ENCODE measurements at regions of chr7 and their contacts with region 1.

Region 1: DNA sequence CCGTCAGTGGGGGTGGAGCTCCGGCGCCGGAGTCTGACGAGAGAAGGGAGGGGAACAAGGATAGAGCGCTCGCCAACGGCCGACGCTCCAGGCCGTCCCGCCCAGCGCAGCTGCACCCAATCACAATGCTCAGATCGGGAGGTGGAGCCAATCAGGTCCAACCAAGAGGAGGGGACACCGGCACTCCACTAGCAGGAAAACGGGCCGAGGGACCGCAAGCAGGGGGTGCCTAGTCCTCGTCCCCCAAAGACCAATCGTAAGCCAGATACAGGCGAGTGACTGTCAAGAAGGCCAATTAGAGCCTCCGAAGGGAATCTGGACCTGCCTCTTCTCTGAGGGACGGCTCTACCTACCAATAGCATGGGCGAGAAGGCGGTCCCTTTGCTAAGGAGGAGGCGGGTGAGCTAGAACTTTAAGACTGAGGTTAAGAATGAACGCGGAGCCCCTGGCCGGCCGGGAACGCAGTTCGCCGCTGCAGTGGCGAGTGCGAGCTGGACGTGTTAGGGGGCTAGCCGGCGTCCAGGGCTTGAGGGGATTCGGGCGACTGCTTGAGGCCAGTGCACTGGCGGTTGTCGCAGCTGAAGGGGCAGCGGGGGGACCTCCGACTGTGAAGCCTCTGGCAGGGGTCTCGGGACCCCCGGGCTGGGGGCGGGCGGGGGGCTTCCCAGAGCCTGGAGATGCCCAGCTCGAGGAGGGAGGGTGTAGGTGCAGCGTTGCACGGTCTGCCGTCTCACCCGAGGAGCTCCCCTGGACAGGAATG is at the start of gene FBXO24:
- DNase-seq: peak; percentile 100
- ATAC-seq: peak; percentile 90
- H3K4me3 ChIP-seq: peak within 1 kb of the TSS; percentile 83
- H3K27ac ChIP-seq: peak within 1 kb of the TSS; percentile 88
- H3K4me1 ChIP-seq: peaks cover 24% of the 10 kb centered on the region
- H3K27me3 ChIP-seq: no peaks in the 10 kb centered on the region
- CTCF ChIP-seq: no peak
- EP300 ChIP-seq: 0 out of 4 replicates have a peak, but pooled peaks of 1 of the 2 experiments have one; percentile 3
- POLR2A ChIP-seq: peak; percentile 53; the same call in 1 of the 2 replicates
- RAD21 ChIP-seq: no peak
- polyA plus RNA-seq, gene FBXO24: not detected

Region 2: GRCh38 chr7:99499721-99500636 is 1086.5 kb before region 1 on chr7 and contains the start of gene ZNF394:
- CTCF ChIA-PET with region 1: no interaction called
- POLR2A ChIA-PET with region 1: no interaction called
- RAD21 ChIA-PET with region 1: no interaction called
- SMC1A ChIA-PET with region 1: no interaction called
- in situ Hi-C with region 1: no loop called
- intact Hi-C with region 1: no loop called
- DNase-seq: peak; percentile 62
- ATAC-seq: peak; percentile 66
- H3K4me3 ChIP-seq: peak within 1 kb of the TSS; percentile 95
- H3K27ac ChIP-seq: peak within 1 kb of the TSS; percentile 92
- H3K4me1 ChIP-seq: no peaks in the 10 kb centered on the region
- H3K27me3 ChIP-seq: no peaks in the 10 kb centered on the region
- CTCF ChIP-seq: no peak
- EP300 ChIP-seq: peak in 1 of 2 experiments; percentile 51; a peak in 1 of 4 replicates
- POLR2A ChIP-seq: peak; percentile 90
- RAD21 ChIP-seq: no peak
- polyA plus RNA-seq, gene ZNF394: 2.5 to 5.3 TPM

Region 3: DNA sequence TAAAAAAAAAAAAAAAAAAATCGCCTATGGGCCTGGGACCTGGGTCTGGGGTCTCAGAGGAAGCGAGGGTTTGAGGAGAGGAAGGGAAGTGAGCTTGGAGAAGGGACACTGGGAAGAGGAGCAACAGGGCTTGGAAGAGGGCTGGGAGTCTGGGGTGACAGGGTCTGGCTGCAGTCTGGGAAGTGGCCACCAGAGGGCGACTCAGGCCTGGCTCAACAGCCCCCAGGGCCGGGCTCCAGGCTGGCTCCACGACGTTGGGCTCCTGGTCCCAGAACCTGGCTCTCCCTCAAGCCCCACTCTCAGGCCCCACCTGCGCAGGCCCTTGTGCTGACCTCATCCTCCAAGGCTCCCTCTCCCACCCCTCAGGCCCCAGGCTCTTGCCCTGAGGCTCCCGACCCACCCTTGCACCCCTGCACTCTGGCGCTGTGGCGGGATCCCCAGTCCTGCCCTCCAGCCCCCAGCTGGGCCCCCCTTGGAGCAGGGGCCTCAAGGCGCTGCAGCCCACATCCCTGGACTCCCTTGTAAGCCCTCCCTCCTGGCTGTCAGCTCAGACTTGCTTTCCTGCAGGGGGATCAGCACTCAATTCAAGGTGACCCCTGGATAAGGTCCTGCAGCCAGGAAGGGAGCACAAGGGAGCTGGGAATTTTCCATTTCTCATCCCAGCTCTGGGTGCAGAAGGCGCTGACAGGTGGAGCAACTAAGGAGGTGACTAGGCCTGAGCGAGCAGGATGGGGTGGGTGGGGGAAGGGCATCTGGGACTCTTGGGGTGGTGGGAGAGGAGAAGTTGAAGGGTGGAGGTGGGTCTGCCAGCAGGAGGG is 117.0 kb before region 1 on chr7:
- CTCF ChIA-PET with region 1: interaction called, 15 read pairs
- POLR2A ChIA-PET with region 1: interaction called, 8 read pairs
- RAD21 ChIA-PET with region 1: interaction called, 5 read pairs
- SMC1A ChIA-PET with region 1: interaction called, 3 read pairs
- in situ Hi-C with region 1: no loop called
- intact Hi-C with region 1: no loop called
- DNase-seq: no peak
- ATAC-seq: peak; percentile 94
- H3K4me3 ChIP-seq: no peak overlapping the region
- H3K27ac ChIP-seq: no peak overlapping the region
- H3K4me1 ChIP-seq: peaks cover 12% of the 10 kb centered on the region
- H3K27me3 ChIP-seq: no peaks in the 10 kb centered on the region
- CTCF ChIP-seq: peak; percentile 95 to 96 (median 96)
- EP300 ChIP-seq: no peak
- POLR2A ChIP-seq: peak; percentile 63; the same call in 1 of the 2 replicates
- RAD21 ChIP-seq: peak; percentile 85

Region 4: GRCh38 chr7:100538654-100539435 is 47.6 kb before region 1 on chr7 and contains the start of gene AGFG2:
- CTCF ChIA-PET with region 1: interaction called, 4 read pairs
- POLR2A ChIA-PET with region 1: interaction called, 28 read pairs
- RAD21 ChIA-PET with region 1: interaction called, 20 read pairs
- SMC1A ChIA-PET with region 1: interaction called, 4 read pairs
- in situ Hi-C with region 1: no loop called
- intact Hi-C with region 1: no loop called
- DNase-seq: peak; percentile 98
- ATAC-seq: peak; percentile 96
- H3K4me3 ChIP-seq: peak within 1 kb of the TSS; percentile 85
- H3K27ac ChIP-seq: peak within 1 kb of the TSS; percentile 67
- H3K4me1 ChIP-seq: peaks cover 21% of the 10 kb centered on the region
- H3K27me3 ChIP-seq: no peaks in the 10 kb centered on the region
- CTCF ChIP-seq: no peak
- EP300 ChIP-seq: no peak
- POLR2A ChIP-seq: peak; percentile 90
- RAD21 ChIP-seq: 0 out of 2 replicates have a peak, but pooled peaks have one; percentile 8
- polyA plus RNA-seq, gene AGFG2: 0.90 to 1.1 TPM

Region 5: DNA sequence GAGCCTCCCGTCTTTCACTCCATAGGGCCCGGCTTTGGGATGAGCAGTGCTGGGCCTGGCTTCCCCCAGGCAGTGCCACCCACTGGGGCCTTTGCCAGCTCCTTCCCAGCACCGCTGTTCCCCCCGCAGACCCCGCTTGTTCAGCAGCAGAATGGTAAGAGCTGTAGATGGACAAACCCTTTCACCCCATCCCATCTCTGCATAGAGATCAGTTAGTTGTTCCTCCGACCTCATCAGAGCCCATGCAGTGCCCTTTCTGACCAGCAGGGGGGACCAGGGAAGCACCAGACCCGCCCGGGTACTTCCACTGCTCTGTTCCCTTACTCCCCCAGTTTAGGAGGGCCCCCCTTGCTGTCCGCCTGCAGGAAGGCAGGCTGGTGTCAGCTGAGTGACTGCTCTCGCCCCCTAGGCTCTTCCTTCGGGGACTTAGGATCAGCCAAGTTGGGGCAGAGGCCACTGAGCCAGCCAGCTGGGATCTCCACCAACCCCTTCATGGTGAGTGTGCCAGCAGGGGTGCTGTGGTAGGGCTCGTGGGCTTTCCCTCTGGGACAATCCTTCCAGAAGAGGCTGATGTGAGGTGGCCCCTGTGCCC is 22.5 kb before region 1 on chr7:
- CTCF ChIA-PET with region 1: interaction called, 190 read pairs
- POLR2A ChIA-PET with region 1: interaction called, 5 read pairs
- RAD21 ChIA-PET with region 1: interaction called, 21 read pairs
- SMC1A ChIA-PET with region 1: interaction called, 19 read pairs
- in situ Hi-C with region 1: no loop called
- intact Hi-C with region 1: no loop called
- DNase-seq: no peak
- ATAC-seq: peak; percentile 84
- H3K4me3 ChIP-seq: no peak overlapping the region
- H3K27ac ChIP-seq: no peak overlapping the region
- H3K4me1 ChIP-seq: peaks cover 8% of the 10 kb centered on the region
- H3K27me3 ChIP-seq: no peaks in the 10 kb centered on the region
- CTCF ChIP-seq: peak; percentile 94 to 98 (median 97)
- EP300 ChIP-seq: no peak
- POLR2A ChIP-seq: peak; percentile 35
- RAD21 ChIP-seq: peak; percentile 71

Region 6: GRCh38 chr7:100611974-100612729 is 25.7 kb after region 1 on chr7 and contains the start of gene MOSPD3:
- CTCF ChIA-PET with region 1: interaction called, 35 read pairs
- POLR2A ChIA-PET with region 1: interaction called, 28 read pairs
- RAD21 ChIA-PET with region 1: interaction called, 11 read pairs
- SMC1A ChIA-PET with region 1: interaction called, 10 read pairs
- in situ Hi-C with region 1: no loop called
- intact Hi-C with region 1: no loop called
- DNase-seq: peak; percentile 99
- ATAC-seq: peak; percentile 98
- H3K4me3 ChIP-seq: peak within 1 kb of the TSS; percentile 75
- H3K27ac ChIP-seq: peak within 1 kb of the TSS; percentile 97
- H3K4me1 ChIP-seq: peaks cover 5% of the 10 kb centered on the region
- H3K27me3 ChIP-seq: peaks cover 0 to 3% of the 10 kb centered on the region in 2 experiments; a peak in 2 of 4 replicates
- CTCF ChIP-seq: no peak
- EP300 ChIP-seq: no peak
- POLR2A ChIP-seq: peak; percentile 90
- RAD21 ChIP-seq: no peak
- polyA plus RNA-seq, gene MOSPD3: 0.61 to 1.2 TPM

Region 7: DNA sequence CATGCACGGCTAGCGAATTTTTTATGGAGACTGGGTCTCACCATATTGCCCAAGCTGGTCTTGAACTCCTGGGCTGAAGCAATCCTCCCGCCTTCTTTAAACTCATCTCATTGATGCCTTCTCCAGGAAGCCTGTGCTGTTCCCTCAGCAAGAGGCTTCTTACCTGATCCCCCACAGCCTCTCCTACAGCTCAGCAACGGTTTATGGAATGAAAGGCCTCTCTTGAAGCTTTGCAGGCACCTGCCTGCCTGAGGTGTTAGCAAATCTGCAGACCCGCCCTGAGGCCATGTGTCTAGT is 498.4 kb after region 1 on chr7:
- CTCF ChIA-PET with region 1: no interaction called
- POLR2A ChIA-PET with region 1: no interaction called
- RAD21 ChIA-PET with region 1: no interaction called
- SMC1A ChIA-PET with region 1: no interaction called
- in situ Hi-C with region 1: no loop called
- intact Hi-C with region 1: no loop called
- DNase-seq: no peak
- ATAC-seq: no peak
- H3K4me3 ChIP-seq: peak overlapping the region; percentile 96; the same call in 1 of the 2 replicates
- H3K27ac ChIP-seq: peak overlapping the region; percentile 100
- H3K4me1 ChIP-seq: peaks cover 14% of the 10 kb centered on the region
- H3K27me3 ChIP-seq: no peaks in the 10 kb centered on the region
- CTCF ChIP-seq: no peak
- EP300 ChIP-seq: no peak
- POLR2A ChIP-seq: no peak
- RAD21 ChIP-seq: no peak